ENCODE measurements at regions of chr14 and their contacts with region 1.

Region 1: GRCh38 chr14:26655128-26655527 is 57.3 kb upstream of the NOVA1 start:
- DNase-seq: no peak
- ATAC-seq: no peak
- H3K4me3 ChIP-seq: no peak overlapping the region
- H3K27ac ChIP-seq: no peak overlapping the region
- H3K4me1 ChIP-seq: no peaks in the 10 kb centered on the region
- H3K27me3 ChIP-seq: no peaks in the 10 kb centered on the region
- CTCF ChIP-seq: no peak
- POLR2A ChIP-seq: no peak

Region 2: GRCh38 chr14:26500028-26500427 is 155.1 kb before region 1 on chr14:
- intact Hi-C with region 1: loop called in 1 of 10 experiments (anchors 5 kb)
- DNase-seq: no peak
- ATAC-seq: no peak
- H3K4me3 ChIP-seq: no peak overlapping the region
- H3K27ac ChIP-seq: no peak overlapping the region
- H3K4me1 ChIP-seq: no peaks in the 10 kb centered on the region
- H3K27me3 ChIP-seq: no peaks in the 10 kb centered on the region
- CTCF ChIP-seq: no peak
- POLR2A ChIP-seq: no peak

Region 3: GRCh38 chr14:26548406-26548805 is 106.7 kb before region 1 on chr14:
- intact Hi-C with region 1: no loop called
- DNase-seq: no peak
- ATAC-seq: no peak
- H3K4me3 ChIP-seq: no peak overlapping the region
- H3K27ac ChIP-seq: no peak overlapping the region
- H3K4me1 ChIP-seq: no peaks in the 10 kb centered on the region
- H3K27me3 ChIP-seq: no peaks in the 10 kb centered on the region
- CTCF ChIP-seq: no peak
- POLR2A ChIP-seq: no peak

Region 4: DNA sequence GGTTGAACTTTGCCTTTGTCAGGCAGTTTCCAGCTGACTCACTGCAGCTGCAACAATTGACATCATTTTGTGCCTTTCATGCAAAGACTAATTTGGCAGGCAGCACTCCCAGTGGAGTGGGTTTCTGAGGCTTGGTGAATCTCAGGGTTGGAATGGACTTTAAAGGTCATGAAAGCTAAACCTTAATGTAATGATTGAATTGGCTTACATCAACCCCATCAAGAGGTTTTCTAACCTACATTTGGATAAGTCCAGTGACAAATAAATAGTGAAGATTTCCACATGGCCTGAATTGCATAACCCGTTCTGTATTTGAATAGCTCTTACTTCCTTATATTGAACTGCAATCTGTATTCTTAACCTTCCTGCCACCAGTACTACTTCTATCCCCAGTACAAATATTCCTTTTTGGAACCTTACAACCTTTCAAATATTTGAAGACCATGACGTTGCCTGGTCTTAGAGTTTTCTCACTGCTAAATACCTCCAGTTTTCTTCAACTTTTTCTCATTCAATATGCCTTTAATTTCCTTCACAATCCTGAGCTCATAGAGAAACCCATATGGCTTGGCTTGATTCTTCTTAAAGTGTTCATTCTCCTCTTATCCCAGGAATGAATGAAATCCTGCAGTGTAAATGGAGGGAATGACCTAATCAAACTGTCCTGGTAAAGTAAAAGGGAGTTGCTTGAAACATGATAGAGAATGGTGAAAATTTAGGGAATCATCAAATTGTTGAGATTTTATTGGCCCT is 110.8 kb after region 1 on chr14:
- intact Hi-C with region 1: no loop called
- DNase-seq: peak in 4 of 5 donors; percentile 18 to 62 (median 42)
- ATAC-seq: peak in 3 of 4 donors; percentile 58 to 89 (median 65)
- H3K4me3 ChIP-seq: no peak overlapping the region
- H3K27ac ChIP-seq: peak overlapping the region in 1 of 12 donors; percentile 23
- H3K4me1 ChIP-seq: no peaks in the 10 kb centered on the region
- H3K27me3 ChIP-seq: no peaks in the 10 kb centered on the region
- CTCF ChIP-seq: no peak
- POLR2A ChIP-seq: no peak

Region 5: DNA sequence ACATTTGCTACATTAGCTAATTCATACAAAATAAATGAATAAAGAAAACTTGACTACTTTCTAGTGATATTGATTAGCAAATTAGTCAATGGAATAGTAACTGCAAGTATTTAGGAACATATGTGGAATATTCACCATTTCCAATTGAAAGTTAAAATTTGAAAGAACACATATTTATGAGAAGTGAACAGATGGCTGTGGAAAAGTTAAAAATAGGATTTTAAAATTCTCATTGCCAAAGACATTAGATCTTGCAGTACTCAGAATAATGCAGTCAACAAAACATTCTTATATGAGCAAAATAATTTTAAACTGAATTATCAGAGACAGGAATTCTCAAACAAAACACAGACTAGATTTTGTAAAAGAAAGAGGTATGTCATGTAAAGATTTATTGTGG is 556.6 kb after region 1 on chr14:
- intact Hi-C with region 1: no loop called
- DNase-seq: no peak
- ATAC-seq: no peak
- H3K4me3 ChIP-seq: no peak overlapping the region
- H3K27ac ChIP-seq: no peak overlapping the region
- H3K4me1 ChIP-seq: no peaks in the 10 kb centered on the region
- H3K27me3 ChIP-seq: no peaks in the 10 kb centered on the region
- CTCF ChIP-seq: no peak
- POLR2A ChIP-seq: no peak